Ovary (tissue), 10 donors: ENCODE measurements at regions of chr22 and their contacts with region 1.

Region 1: GRCh38 chr22:38843201-38843715 is 570 bp downstream of the NPTXR start:
- DNase-seq: peak; percentile 56 to 83 (median 68)
- H3K4me3 ChIP-seq: peak overlapping the region; percentile 36
- H3K27ac ChIP-seq: peak overlapping the region; percentile 21 to 64
- H3K4me1 ChIP-seq: no peaks in the 10 kb centered on the region
- H3K27me3 ChIP-seq: no peaks in the 10 kb centered on the region
- CTCF ChIP-seq: peak in 2 of 3 donors; percentile 48 to 77
- EP300 ChIP-seq: no peak
- POLR2A ChIP-seq: no peak

Region 2: DNA sequence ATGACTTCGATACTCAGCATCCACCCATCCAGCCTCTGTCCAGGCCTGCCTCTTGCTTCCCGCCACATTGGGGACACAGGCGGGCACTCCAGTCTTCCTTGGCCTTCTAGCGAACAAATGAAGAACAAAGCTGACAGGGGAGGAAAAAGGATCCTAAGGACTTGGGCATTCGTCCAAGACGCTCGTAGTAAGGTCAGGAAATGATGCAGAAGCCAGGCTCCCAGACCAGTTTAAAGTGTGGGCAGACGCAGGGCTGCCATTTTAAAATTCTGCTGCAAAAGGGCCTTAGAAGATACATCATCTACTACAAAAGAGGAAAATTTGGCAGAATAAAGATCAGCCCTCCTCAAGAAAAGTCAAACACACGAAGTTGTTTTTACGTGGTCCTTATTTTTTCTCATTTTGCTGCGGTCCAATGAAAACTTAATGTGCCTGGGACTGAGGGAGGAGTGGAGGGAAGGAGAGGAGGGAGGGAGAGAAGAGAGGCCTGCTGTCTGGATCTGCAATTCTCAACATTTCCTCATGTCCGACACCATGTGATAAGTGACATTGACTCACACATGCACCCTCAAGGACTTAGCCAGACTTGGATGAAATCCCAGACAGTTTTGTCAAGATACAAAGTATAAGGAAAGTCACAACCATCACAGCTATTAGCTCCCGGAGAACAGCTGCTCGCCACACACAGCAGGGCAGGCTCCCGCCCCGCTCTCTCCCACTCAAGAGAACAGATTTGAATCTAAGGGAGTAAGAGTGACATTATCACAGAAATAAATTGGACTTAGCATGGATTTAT is 55.0 kb before region 1 on chr22:
- intact Hi-C with region 1: loop called in 2 of 4 experiments (anchors 5 kb)
- DNase-seq: peak in 3 of 5 donors; percentile 58 to 70 (median 66)
- H3K4me3 ChIP-seq: no peak overlapping the region
- H3K27ac ChIP-seq: peak overlapping the region in 1 of 2 donors; percentile 93
- H3K4me1 ChIP-seq: peaks cover 25% of the 10 kb centered on the region
- H3K27me3 ChIP-seq: no peaks in the 10 kb centered on the region
- CTCF ChIP-seq: no peak
- EP300 ChIP-seq: no peak
- POLR2A ChIP-seq: no peak